ENCODE measurements at regions of chr10 and their contacts with region 1.

Region 1: GRCh38 chr10:6823792-6824191 is 243.7 kb upstream of the PRKCQ start:
- DNase-seq: no peak
- H3K4me3 ChIP-seq: no peak overlapping the region
- H3K27ac ChIP-seq: no peak overlapping the region
- H3K4me1 ChIP-seq: no peaks in the 10 kb centered on the region
- H3K27me3 ChIP-seq: no peaks in the 10 kb centered on the region
- CTCF ChIP-seq: no peak

Region 2: GRCh38 chr10:7260412-7260900 is 436.7 kb after region 1 on chr10:
- CTCF ChIA-PET with region 1: no interaction called
- POLR2A ChIA-PET with region 1: no interaction called
- intact Hi-C with region 1: loop called (anchors 2 kb)
- DNase-seq: peak in 1 of 2 experiments; percentile 2
- H3K4me3 ChIP-seq: no peak overlapping the region
- H3K27ac ChIP-seq: no peak overlapping the region
- H3K4me1 ChIP-seq: no peaks in the 10 kb centered on the region
- H3K27me3 ChIP-seq: peaks cover 4% of the 10 kb centered on the region; the same call in 1 of the 2 replicates
- CTCF ChIP-seq: peak; percentile 37; the same call in 1 of the 2 replicates